HCT116 (cell line): ENCODE measurements at regions of chr16 and their contacts with region 1.

Region 1: GRCh38 chr16:82011199-82011641 is at the start of gene SDR42E1:
- DNase-seq: peak; percentile 91
- ATAC-seq: peak; percentile 98
- H3K4me3 ChIP-seq: peak within 1 kb of the TSS; percentile 69 to 84
- H3K27ac ChIP-seq: peak within 1 kb of the TSS; percentile 16; the same call in 1 of the 2 replicates
- H3K4me1 ChIP-seq: peaks cover 0 to 18% of the 10 kb centered on the region in 2 experiments; a peak in 3 of 4 replicates
- H3K27me3 ChIP-seq: no peaks in the 10 kb centered on the region
- CTCF ChIP-seq: no peak
- POLR2A ChIP-seq: peak; percentile 62
- RAD21 ChIP-seq: no peak
- total RNA-seq, gene SDR42E1: 17.4 TPM

Region 2: GRCh38 chr16:82169861-82170845 is 158.9 kb after region 1 on chr16 and contains the start of gene MPHOSPH6:
- CTCF ChIA-PET with region 1: no interaction called
- POLR2A ChIA-PET with region 1: no interaction called
- RAD21 ChIA-PET with region 1: no interaction called
- intact Hi-C with region 1: loop called (anchors 5 kb)
- DNase-seq: peak; percentile 80
- ATAC-seq: peak; percentile 99
- H3K4me3 ChIP-seq: peak within 1 kb of the TSS; percentile 83 to 93
- H3K27ac ChIP-seq: peak within 1 kb of the TSS; percentile 66; the same call in 1 of the 2 replicates
- H3K4me1 ChIP-seq: peaks cover 5 to 13% of the 10 kb centered on the region in 2 experiments; a peak in 3 of 4 replicates
- H3K27me3 ChIP-seq: peaks cover 34% of the 10 kb centered on the region
- CTCF ChIP-seq: no peak; a peak in 1 of 6 replicates
- POLR2A ChIP-seq: peak; percentile 91
- RAD21 ChIP-seq: no peak
- total RNA-seq, gene MPHOSPH6: 52.2 TPM